ENCODE measurements at regions of chr3 and their contacts with region 1.

Region 1: GRCh38 chr3:58188173-58188564 is 22.6 kb downstream of the DNASE1L3 start:
- DNase-seq: no peak
- ATAC-seq: peak; percentile 66
- H3K4me3 ChIP-seq: no peak overlapping the region
- H3K27ac ChIP-seq: no peak overlapping the region
- H3K4me1 ChIP-seq: peaks cover 7% of the 10 kb centered on the region; the same call in 1 of the 2 replicates
- H3K27me3 ChIP-seq: no peaks in the 10 kb centered on the region
- CTCF ChIP-seq: no peak

Region 2: GRCh38 chr3:58217209-58217811 is 29.1 kb after region 1 on chr3:
- CTCF ChIA-PET with region 1: interaction called, 12 read pairs
- POLR2A ChIA-PET with region 1: no interaction called
- in situ Hi-C with region 1: no loop called
- intact Hi-C with region 1: no loop called
- DNase-seq: peak; percentile 79
- ATAC-seq: peak; percentile 96
- H3K4me3 ChIP-seq: peak overlapping the region; percentile 5 to 45; a peak in 2 of 4 replicates
- H3K27ac ChIP-seq: peak overlapping the region; percentile 17; the same call in 1 of the 2 replicates
- H3K4me1 ChIP-seq: peaks cover 11% of the 10 kb centered on the region
- H3K27me3 ChIP-seq: no peaks in the 10 kb centered on the region
- CTCF ChIP-seq: peak; percentile 87

Region 3: GRCh38 chr3:58299839-58300516 is 111.8 kb after region 1 on chr3:
- CTCF ChIA-PET with region 1: interaction called, 33 read pairs
- POLR2A ChIA-PET with region 1: no interaction called
- in situ Hi-C with region 1: no loop called
- intact Hi-C with region 1: loop called (anchors 1 kb)
- DNase-seq: no peak
- ATAC-seq: peak; percentile 52; the same call in 1 of the 2 replicates
- H3K4me3 ChIP-seq: no peak overlapping the region
- H3K27ac ChIP-seq: no peak overlapping the region
- H3K4me1 ChIP-seq: no peaks in the 10 kb centered on the region
- H3K27me3 ChIP-seq: no peaks in the 10 kb centered on the region
- CTCF ChIP-seq: peak; percentile 74

Region 4: DNA sequence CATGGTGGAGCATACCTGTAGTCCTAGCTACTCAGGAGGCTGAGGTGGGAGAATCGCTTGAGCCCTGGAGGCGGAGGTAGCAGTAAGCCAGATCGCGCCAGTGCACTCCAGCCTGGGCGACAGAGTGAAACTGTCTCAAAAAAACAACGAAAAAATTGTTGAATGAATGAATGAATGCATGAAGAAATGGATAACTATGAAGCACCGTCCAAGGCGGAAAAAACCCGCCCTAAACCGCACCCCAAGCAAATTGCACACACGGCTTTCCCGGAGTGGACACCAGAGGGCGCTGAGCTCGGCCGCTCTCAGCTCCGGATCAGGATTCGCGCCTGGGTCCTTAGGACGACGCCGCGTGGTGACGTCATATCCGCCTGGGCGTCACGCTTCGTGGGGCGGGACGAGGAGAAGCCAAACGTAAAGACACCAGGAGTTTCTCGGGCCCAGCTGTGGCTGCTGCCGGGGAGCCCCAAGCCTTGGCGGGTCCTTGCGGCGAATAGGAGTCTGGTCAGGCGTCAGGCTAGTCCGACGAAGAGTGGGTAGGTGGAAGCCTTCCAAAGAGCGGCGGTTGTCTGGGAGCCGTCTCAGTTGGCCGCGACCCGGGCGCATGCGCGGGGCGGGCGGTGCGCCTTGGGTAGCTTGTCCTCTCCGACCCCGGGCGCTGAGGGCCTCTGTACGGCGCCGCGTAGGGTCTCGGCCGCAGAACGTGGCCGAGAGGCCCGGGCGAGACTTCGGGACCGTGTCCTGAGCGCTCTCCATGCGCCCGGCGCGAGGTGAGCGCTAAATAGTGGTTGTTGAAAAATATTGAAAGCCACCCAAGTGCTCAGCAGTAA is 117.9 kb after region 1 on chr3 and contains the starts of genes HTD2 and RPP14:
- CTCF ChIA-PET with region 1: interaction called, 33 read pairs
- POLR2A ChIA-PET with region 1: no interaction called
- in situ Hi-C with region 1: no loop called
- intact Hi-C with region 1: no loop called
- DNase-seq: peak; percentile 80
- ATAC-seq: peak; percentile 95
- H3K4me3 ChIP-seq: peak within 1 kb of the TSS; percentile 97
- H3K27ac ChIP-seq: peak within 1 kb of the TSS; percentile 96
- H3K4me1 ChIP-seq: peaks cover 6% of the 10 kb centered on the region
- H3K27me3 ChIP-seq: no peaks in the 10 kb centered on the region
- CTCF ChIP-seq: peak; percentile 95
- total RNA-seq, gene HTD2: 7.9 TPM
- total RNA-seq, gene RPP14: 16.4 TPM

Region 5: DNA sequence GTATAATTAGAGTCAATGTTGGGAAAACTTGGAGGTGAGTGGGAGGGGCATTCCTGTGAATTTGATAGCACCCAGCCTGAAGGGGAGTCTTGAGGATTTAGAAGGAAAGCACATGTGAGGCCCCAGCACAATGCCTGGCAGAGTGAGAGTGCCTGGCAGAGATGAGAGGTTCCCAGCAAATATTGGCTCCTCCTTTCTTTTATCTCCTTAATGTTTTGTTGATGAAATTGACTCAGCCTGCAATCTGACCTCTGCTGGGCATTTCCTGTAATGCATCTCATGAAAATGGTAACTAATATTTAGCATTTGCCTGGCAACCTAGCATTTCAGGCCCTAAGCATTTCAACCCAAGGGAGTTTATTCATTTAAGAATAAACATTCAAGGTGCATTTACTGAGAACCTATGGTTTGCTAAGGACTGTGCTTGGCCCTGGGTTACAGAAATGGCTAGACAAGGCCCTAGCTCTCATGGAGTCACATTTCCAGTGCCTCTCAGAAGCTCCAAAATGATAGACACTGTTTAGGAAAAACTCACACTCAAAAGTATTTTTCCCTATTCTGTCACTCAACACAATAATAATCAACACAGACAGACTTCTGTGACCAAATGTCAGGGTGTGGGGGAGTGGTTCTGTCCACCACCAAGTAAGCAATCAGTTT is 226.5 kb after region 1 on chr3:
- CTCF ChIA-PET with region 1: no interaction called
- POLR2A ChIA-PET with region 1: no interaction called
- in situ Hi-C with region 1: no loop called
- intact Hi-C with region 1: loop called (anchors 10 kb)
- DNase-seq: no peak
- ATAC-seq: peak; percentile 72
- H3K4me3 ChIP-seq: no peak overlapping the region
- H3K27ac ChIP-seq: no peak overlapping the region
- H3K4me1 ChIP-seq: no peaks in the 10 kb centered on the region
- H3K27me3 ChIP-seq: no peaks in the 10 kb centered on the region
- CTCF ChIP-seq: peak; percentile 76

Region 6: DNA sequence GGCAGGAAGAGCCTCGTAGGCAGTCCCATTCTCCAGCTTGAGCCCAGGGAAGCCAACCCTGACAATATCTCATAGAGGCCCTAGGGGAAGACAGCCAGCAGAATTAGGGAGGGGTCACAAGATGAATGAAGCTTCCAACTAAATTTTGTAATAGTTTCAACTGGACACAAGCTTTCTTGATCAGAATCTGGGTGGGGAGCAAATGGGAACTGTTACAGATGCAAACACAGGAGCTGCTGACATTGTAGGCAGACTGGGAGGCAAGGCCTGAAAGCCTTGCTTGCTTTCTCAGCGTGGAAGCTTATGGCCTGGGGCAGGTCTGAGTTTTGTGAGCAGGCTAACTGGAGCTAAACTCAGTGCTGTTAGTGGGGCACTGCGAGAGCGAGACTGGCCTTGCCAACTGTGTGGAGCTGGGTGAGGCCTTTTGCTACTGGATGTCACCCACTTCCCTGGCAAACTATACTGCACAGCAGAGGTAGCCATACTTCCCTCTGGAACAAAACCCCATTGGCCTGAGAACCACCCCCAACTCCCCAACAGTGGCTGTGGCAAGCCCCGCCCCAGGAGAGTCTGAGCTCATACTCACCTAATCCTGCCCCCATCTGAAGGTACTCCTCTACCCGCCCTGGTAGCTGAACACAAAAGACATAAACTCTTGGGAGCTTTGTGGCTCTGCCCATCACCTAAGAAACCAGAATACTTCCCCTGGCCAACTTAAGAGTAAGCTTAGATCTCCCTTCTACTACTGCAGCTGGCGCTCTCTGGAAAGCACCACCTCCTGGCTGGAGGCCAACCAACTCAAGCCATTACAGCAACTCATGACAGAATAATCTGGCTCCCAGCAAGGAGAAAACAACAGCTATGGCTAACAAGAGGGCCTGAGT is 818.7 kb after region 1 on chr3:
- CTCF ChIA-PET with region 1: no interaction called
- POLR2A ChIA-PET with region 1: interaction called, 10 read pairs
- in situ Hi-C with region 1: no loop called
- intact Hi-C with region 1: no loop called
- DNase-seq: no peak
- ATAC-seq: no peak
- H3K4me3 ChIP-seq: no peak overlapping the region
- H3K27ac ChIP-seq: no peak overlapping the region
- H3K4me1 ChIP-seq: no peaks in the 10 kb centered on the region
- H3K27me3 ChIP-seq: no peaks in the 10 kb centered on the region
- CTCF ChIP-seq: no peak

Measured in Panc1 (cell line).